ENCODE measurements at regions of chr3 and their contacts with region 1.

Region 1: GRCh38 chr3:126267226-126267975 is 87.0 kb upstream of the ALDH1L1 start:
- DNase-seq: peak; percentile 45 to 77
- ATAC-seq: peak; percentile 67 to 83 (median 79)
- H3K4me3 ChIP-seq: peak overlapping the region in 9 of 10 donors; percentile 19 to 56 (median 45)
- H3K27ac ChIP-seq: peak overlapping the region; percentile 71 to 94 (median 88)
- H3K4me1 ChIP-seq: peaks cover 5 to 43% (median 27%) of the 10 kb centered on the region in 9 donors
- H3K27me3 ChIP-seq: peaks cover 0 to 18% (median 0%) of the 10 kb centered on the region in 7 donors
- CTCF ChIP-seq: peak in 4 of 9 donors; percentile 6 to 46 (median 36)

Region 2: DNA sequence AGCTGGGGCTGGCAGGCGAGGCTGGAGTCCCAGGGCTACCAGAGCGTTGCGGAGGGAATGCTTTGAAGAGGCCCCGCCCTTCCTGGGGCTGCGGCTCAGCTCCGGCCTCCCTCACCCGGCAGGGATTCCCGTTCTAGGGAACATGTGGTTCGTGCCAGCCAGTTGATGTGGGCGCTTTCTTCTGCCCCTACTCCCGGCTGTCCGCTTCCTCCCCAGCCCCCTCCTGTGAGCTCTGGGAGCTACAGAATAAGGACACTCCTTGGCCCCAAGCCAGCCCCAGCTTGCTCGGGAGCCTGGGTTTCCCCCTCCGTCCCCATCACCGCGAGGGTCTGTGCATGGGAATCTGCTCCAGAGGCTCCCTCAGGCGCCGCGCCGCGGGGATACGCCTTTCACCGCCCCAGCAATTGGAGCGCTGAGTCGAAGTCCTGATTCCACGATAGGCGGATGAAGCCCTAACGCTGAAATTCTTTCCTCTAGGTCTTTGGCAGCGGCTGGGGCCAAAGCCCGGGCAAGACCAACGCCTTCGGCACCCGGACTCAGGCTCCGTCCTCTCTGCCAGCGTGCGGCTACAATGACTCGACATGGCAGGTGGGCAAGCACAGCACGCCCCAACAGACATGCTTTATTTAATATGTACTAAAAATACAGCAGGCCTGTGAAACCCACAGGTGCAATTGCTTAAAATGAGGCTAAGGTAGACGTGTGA is 20.3 kb after region 1 on chr3:
- intact Hi-C with region 1: loop called in 1 of 10 experiments (anchors 2 kb)
- DNase-seq: peak; percentile 62 to 71
- ATAC-seq: peak; percentile 82 to 96 (median 93)
- H3K4me3 ChIP-seq: peak overlapping the region; percentile 14 to 57 (median 49)
- H3K27ac ChIP-seq: peak overlapping the region; percentile 63 to 88 (median 80)
- H3K4me1 ChIP-seq: peaks cover 0 to 30% (median 17%) of the 10 kb centered on the region in 9 donors
- H3K27me3 ChIP-seq: peaks cover 0 to 46% (median 3%) of the 10 kb centered on the region in 7 donors
- CTCF ChIP-seq: no peak

Region 3: GRCh38 chr3:126475413-126476114 is 208.2 kb after region 1 on chr3 and contains the start of gene ZXDC:
- intact Hi-C with region 1: loop called in 1 of 10 experiments (anchors 10 kb)
- DNase-seq: peak; percentile 92 to 97
- ATAC-seq: peak; percentile 86 to 96 (median 93)
- H3K4me3 ChIP-seq: peak within 1 kb of the TSS; percentile 62 to 95 (median 80)
- H3K27ac ChIP-seq: peak within 1 kb of the TSS; percentile 83 to 99 (median 92)
- H3K4me1 ChIP-seq: peaks cover 28 to 51% (median 43%) of the 10 kb centered on the region in 9 donors
- H3K27me3 ChIP-seq: no peaks in the 10 kb centered on the region
- CTCF ChIP-seq: peak in 7 of 9 donors; percentile 26 to 74 (median 52)
- total RNA-seq, gene ZXDC: 15.2 to 25.4 (median 19.7) TPM

Measured in heart right ventricle (tissue), 16 donors.